ENCODE measurements at regions of chr2 and their contacts with region 1.

Region 1: DNA sequence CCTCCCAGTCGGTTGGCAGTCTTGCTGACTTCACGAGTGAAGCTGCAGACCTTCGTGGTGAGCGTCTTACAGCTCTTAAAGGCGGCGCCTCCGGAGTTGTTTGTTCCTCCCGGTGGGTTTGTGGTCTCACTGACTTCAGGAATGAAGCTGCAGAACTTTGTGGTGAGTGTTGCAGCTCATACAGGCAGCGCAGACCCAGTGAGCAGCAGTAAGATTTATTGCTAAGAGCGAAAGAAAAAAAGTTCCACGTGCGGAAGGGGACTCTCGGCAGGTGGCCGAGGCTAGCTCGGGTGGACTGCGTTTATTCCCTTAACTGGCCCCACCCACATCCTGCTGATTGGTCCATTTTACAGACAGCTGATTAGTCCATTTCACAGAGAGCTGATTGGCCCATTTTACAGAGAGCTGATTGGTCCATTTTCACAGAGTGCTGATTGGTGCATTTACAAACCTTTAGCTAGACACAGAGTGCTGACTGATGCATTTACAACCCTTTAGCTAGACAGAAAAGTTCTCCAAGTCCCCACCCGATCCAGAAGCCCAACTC is 240.3 kb downstream of the LRATD1 start:
- DNase-seq: no peak
- H3K4me3 ChIP-seq: no peak overlapping the region
- H3K27ac ChIP-seq: no peak overlapping the region
- H3K4me1 ChIP-seq: no peaks in the 10 kb centered on the region
- H3K27me3 ChIP-seq: no peaks in the 10 kb centered on the region
- CTCF ChIP-seq: no peak

Region 2: DNA sequence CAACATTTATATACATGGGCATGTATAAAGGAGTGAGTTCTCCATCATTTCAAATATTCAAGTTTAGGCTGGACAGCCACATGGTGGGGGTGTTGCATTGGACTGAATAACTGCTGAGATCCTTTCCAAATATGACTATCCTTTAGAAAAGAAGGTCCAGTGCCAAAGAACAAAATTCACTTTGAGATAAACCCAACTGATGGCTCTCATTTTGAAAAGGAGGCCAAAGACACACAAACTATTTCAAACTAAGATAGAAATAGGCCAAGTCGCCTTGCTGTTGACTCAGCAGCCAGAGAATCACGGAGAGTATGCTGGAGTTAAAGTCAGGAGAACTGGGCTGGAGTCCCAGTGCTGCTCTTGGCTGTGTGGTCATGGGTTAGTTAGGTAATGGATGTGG is 444.8 kb before region 1 on chr2:
- CTCF ChIA-PET with region 1: interaction called, 11 read pairs
- dilution Hi-C with region 1: no loop called
- in situ Hi-C with region 1: no loop called
- intact Hi-C with region 1: no loop called
- DNase-seq: peak; percentile 64
- H3K4me3 ChIP-seq: no peak overlapping the region
- H3K27ac ChIP-seq: no peak overlapping the region
- H3K4me1 ChIP-seq: no peaks in the 10 kb centered on the region
- H3K27me3 ChIP-seq: no peaks in the 10 kb centered on the region
- CTCF ChIP-seq: peak in 1 of 2 donors; percentile 53

Region 3: GRCh38 chr2:15177103-15177502 is 304.3 kb after region 1 on chr2:
- CTCF ChIA-PET with region 1: no interaction called
- dilution Hi-C with region 1: no loop called
- in situ Hi-C with region 1: no loop called
- intact Hi-C with region 1: no loop called
- DNase-seq: peak; percentile 85
- H3K4me3 ChIP-seq: no peak overlapping the region
- H3K27ac ChIP-seq: no peak overlapping the region
- H3K4me1 ChIP-seq: peaks cover 8% of the 10 kb centered on the region
- H3K27me3 ChIP-seq: no peaks in the 10 kb centered on the region
- CTCF ChIP-seq: no peak